ENCODE measurements at regions of chr6 and their contacts with region 1.

Region 1: DNA sequence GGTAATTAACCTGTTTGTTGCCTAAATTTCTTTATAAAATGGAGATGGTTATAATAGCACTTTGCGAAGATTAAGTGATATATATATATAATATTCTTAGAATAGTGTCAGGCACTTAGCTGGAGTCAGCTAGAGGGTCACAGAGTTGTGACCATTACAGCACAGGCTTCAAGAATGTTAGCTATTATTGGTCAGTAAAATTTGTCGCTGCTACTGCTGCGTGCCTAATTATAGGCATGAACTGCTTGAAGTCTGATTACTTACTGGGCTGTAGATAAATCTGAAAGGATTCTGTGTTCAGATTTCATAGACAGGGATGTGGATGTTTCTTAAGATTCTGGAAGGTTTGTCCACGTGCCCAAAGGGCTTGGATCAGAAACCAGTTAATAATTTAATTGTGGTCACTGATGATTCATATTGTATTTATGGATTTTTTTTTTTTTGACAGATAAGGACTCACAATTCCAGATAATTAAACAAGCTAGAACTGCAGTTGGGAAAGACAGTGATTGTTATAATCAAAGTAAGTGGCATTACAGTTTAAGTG is 4.7 kb downstream of the SNRNP48 start:
- DNase-seq: no peak
- H3K4me3 ChIP-seq: no peak overlapping the region
- H3K27me3 ChIP-seq: no peaks in the 10 kb centered on the region
- CTCF ChIP-seq: no peak

Region 2: GRCh38 chr6:7292596-7293255 is 301.9 kb before region 1 on chr6:
- CTCF ChIA-PET with region 1: no interaction called
- POLR2A ChIA-PET with region 1: interaction called, 10 read pairs
- DNase-seq: no peak
- H3K4me3 ChIP-seq: no peak overlapping the region
- H3K27me3 ChIP-seq: no peaks in the 10 kb centered on the region
- CTCF ChIP-seq: no peak